OCI-LY7 (cell line): ENCODE measurements at regions of chr9 and their contacts with region 1.

Region 1: GRCh38 chr9:76475686-76476085 is 16.7 kb downstream of the GCNT1 start:
- DNase-seq: no peak
- H3K4me3 ChIP-seq: peak overlapping the region; percentile 12
- H3K27ac ChIP-seq: peak overlapping the region; percentile 95
- H3K4me1 ChIP-seq: peaks cover 62% of the 10 kb centered on the region
- CTCF ChIP-seq: no peak

Region 2: DNA sequence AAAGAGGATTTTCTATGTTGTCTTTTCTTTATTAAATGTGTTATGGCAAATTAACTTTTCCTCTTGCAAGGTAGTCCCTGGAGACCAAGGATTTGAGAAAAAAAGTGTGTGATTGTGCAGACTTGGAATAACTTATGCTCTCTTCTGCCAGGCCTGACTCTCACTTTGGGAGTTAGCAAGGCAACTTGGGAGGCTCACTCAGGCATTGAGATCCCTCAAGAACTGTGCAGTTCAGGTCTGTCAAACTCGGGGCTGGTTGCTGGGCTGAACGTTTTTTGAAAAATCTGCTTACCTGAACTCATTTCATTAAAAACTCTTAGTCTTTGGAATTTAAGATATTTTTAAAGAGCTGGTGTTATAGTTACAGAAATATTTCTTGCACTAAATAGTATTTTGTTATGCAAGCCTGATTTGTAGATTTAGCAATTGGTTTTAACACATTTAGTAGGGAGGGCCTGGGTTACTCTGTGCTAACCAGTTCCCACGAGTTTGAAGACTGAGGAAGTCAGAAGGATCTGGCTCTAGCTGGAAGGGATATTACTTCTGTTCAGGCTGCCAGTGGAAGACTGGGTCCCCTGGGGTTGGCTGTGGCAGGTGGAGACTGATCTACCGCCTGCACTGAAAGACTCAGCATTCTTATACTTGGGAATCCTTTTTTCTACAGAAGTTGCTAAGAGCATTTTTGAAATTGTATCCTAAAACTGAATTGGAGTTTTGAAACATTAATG is 735.6 kb before region 1 on chr9:
- CTCF ChIA-PET with region 1: no interaction called
- POLR2A ChIA-PET with region 1: no interaction called
- intact Hi-C with region 1: no loop called
- DNase-seq: no peak
- H3K4me3 ChIP-seq: no peak overlapping the region
- H3K27ac ChIP-seq: no peak overlapping the region
- H3K4me1 ChIP-seq: no peaks in the 10 kb centered on the region
- CTCF ChIP-seq: no peak

Region 3: DNA sequence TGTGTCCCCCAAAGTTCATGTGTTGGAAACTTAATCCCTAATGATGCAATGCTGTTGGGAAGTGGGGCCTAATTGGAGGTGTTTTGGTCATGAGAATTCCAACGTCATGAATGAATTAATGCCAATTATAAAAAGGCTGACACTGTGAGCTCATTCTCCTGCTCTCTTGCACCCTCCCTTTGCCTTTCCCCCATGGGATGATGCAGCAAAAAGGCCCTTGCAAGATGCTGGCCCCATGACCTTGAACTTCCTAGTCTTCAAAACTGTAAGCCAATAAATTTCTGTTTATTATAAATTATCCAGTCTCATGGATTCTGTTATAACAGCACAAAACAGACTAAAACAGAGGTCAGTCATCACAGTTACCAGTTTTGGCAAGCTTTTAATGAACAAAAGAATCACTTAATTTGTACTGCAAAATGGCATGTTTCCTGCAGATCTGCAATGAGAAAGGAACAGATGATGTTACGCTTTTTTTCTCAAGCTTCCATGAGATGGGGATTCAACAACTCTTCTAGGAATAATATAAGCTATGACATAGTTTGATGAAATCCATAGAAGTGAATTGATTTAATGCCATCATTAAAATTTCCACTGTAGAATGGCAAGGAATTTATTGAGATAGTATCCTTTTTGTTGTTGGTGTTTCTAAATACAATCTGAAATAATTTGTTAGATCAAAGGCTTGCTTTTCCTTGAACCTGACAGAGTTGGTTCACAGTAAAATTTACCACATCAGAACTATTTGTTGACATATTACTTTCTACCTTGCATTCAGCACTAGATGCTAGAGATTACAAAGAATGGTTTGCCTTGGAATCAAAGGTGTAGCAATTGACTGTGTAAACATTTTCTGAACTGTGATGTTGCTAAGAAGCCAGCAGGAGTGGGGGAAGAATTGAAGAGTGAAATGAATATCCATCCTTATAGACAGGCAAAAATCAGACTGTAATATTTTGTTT is 52.2 kb before region 1 on chr9:
- CTCF ChIA-PET with region 1: no interaction called
- POLR2A ChIA-PET with region 1: interaction called, 13 read pairs
- intact Hi-C with region 1: no loop called
- DNase-seq: no peak
- H3K4me3 ChIP-seq: no peak overlapping the region
- H3K27ac ChIP-seq: no peak overlapping the region
- H3K4me1 ChIP-seq: peaks cover 4% of the 10 kb centered on the region
- CTCF ChIP-seq: no peak

Region 4: GRCh38 chr9:76510041-76510440 is 34.4 kb after region 1 on chr9:
- CTCF ChIA-PET with region 1: no interaction called
- POLR2A ChIA-PET with region 1: interaction called, 4 read pairs
- intact Hi-C with region 1: loop called (anchors 2 kb)
- DNase-seq: no peak
- H3K4me3 ChIP-seq: no peak overlapping the region
- H3K27ac ChIP-seq: no peak overlapping the region
- H3K4me1 ChIP-seq: no peaks in the 10 kb centered on the region
- CTCF ChIP-seq: no peak